ENCODE measurements at regions of chr7 and their contacts with region 1.

Region 1: GRCh38 chr7:6340241-6340640 is 67.8 kb upstream of the CYTH3 start:
- DNase-seq: no peak
- H3K27ac ChIP-seq: peak overlapping the region; percentile 0; the same call in 1 of the 2 replicates
- CTCF ChIP-seq: no peak

Region 2: GRCh38 chr7:5822742-5823503 is 517.3 kb before region 1 on chr7:
- CTCF ChIA-PET with region 1: no interaction called
- POLR2A ChIA-PET with region 1: interaction called, 12 read pairs
- DNase-seq: peak; percentile 97
- H3K27ac ChIP-seq: peak overlapping the region; percentile 89
- CTCF ChIP-seq: no peak

Region 3: DNA sequence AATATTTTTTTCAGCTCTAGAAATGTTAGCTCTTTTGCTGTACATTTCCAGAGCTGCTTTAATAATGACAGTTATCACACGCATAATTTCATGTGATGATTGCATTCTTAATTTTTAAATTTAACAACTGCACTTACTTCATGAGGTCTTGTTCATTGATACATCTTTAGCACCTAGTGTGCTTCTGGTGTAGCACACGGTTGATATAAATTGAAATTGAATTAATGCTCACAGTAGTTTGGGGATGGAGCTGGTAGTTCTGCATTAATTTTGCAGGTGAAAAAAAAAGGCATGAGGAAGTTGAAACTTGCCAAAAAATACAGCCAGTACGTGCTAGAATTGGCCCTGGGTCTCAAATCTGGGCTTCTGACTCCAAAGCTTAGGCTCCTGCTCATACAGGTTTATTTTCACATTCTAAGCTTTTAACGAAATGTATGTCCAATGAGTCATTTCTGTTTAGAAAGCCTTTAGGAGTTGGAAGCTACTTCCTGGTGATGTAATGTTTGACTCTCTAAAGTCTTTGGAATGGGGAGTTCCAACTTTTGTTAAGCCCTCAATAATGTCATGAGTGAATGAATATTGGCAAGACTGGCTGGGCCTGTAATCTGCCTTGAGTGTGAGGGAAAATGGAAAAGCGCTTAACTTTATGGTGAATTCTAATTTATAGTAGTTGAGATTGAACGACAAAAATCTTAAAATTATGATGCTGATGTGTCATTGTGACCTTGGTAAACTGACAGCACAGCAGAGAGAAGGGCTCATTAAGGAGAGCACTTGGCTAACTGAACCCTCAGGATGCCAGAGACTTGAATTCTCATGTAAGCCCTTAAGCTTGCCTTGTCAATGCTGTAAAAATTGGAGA is 45.1 kb after region 1 on chr7:
- CTCF ChIA-PET with region 1: no interaction called
- POLR2A ChIA-PET with region 1: no interaction called
- DNase-seq: peak; percentile 91
- H3K27ac ChIP-seq: peak overlapping the region; percentile 94
- CTCF ChIP-seq: no peak

Region 4: GRCh38 chr7:6520163-6520981 is 180.1 kb after region 1 on chr7:
- CTCF ChIA-PET with region 1: no interaction called
- POLR2A ChIA-PET with region 1: no interaction called
- DNase-seq: no peak
- H3K27ac ChIP-seq: no peak overlapping the region
- CTCF ChIP-seq: no peak